HepG2 (cell line): ENCODE measurements at regions of chr16 and their contacts with region 1.

Region 1: DNA sequence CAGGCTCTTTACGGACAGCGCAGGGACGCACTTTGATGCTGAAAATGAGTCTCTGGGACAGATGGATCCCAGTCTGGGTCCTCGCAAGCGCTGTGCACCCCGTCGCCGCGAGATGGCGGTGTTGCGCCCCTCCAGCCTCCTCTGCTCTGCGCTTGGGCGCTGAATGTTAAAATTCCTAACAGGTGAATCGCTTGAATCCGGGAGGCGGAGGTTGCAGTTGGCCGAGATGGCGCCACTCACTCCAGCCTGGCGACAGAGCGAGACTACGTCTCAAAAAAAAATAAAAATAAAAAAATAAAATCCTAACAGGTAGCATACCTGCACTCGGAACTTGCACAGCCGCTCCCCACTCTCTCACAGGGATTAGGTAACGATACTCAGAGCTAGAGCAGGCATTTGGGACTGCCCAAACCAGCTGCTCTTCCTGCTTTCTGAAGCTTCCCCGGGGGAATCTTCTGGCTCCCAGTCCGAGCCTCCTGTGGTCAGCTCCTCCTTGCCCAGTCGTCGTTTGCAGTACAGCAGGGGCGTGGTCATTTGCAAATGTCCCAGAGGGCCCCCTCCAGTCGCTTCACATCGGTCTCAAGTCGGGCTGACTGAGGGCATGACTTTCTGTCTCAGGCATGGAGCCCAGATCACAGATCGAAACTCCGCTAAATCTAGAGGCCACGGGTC is 26.2 kb upstream of the OSGIN1 start:
- DNase-seq: peak; percentile 82
- ATAC-seq: peak; percentile 83
- H3K4me3 ChIP-seq: peak overlapping the region; percentile 20 to 69 (median 47)
- H3K27ac ChIP-seq: no peak overlapping the region
- H3K4me1 ChIP-seq: peaks cover 43% of the 10 kb centered on the region
- H3K27me3 ChIP-seq: peaks cover 3 to 21% of the 10 kb centered on the region in 2 experiments; a peak in 4 of 5 replicates
- CTCF ChIP-seq: peak; percentile 97
- EP300 ChIP-seq: peak in 1 of 2 experiments; percentile 68; a peak in 1 of 4 replicates
- POLR2A ChIP-seq: no peak
- RAD21 ChIP-seq: peak; percentile 97

Region 2: GRCh38 chr16:83898463-83899271 is 28.2 kb before region 1 on chr16 and contains the start of gene MLYCD:
- CTCF ChIA-PET with region 1: no interaction called
- POLR2A ChIA-PET with region 1: no interaction called
- in situ Hi-C with region 1: no loop called
- intact Hi-C with region 1: loop called (anchors 1 kb)
- DNase-seq: peak; percentile 76
- ATAC-seq: peak; percentile 93
- H3K4me3 ChIP-seq: peak within 1 kb of the TSS; percentile 68 to 84 (median 74)
- H3K27ac ChIP-seq: peak within 1 kb of the TSS; percentile 83
- H3K4me1 ChIP-seq: peaks cover 39% of the 10 kb centered on the region
- H3K27me3 ChIP-seq: peaks cover 0 to 13% of the 10 kb centered on the region in 2 experiments; a peak in 3 of 5 replicates
- CTCF ChIP-seq: no peak
- EP300 ChIP-seq: peak; percentile 11 to 33; a peak in 2 of 4 replicates
- POLR2A ChIP-seq: peak; percentile 61 to 74
- RAD21 ChIP-seq: no peak
- total RNA-seq, gene MLYCD: 2.8 and 4.0 TPM in 2 replicates

Region 3: DNA sequence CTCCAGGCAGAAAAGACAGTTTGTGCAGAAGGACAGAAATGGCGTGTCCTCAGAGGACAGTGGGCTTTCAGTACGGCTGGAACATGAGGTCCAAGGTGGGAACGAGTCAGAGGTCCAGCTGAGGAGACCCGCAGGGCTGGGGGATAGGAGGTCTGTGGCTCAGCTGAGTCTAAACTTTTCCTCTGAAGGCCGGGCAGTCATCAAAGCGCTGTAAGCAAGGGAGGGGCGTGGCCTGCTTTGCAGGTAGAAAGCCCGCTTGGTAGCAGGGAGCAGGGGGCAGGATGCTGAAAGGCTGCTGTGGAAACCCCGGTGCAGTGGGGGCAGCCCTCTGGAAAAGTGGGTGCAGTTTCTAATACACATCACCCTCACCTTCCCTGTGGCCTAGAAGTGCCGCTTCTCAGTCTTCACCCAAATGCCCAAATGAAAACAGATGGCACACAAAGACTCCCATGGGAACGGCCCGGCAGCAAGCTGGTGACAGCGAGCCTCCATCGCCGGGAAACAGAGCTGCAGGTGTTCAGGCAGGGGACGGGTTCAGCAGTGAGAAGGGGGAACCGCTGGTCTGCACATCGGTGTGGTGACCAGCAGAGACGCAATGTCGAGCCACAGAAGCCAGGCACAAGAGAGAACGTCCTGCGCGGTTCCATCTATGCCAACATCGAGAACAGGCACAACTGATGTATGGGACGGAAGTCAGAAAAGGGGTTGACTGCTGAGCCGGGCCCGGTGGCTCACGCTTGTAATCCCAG is 13.9 kb after region 1 on chr16:
- CTCF ChIA-PET with region 1: no interaction called
- POLR2A ChIA-PET with region 1: interaction called, 5 read pairs
- in situ Hi-C with region 1: no loop called
- intact Hi-C with region 1: loop called (anchors 2 kb)
- DNase-seq: no peak
- ATAC-seq: no peak
- H3K4me3 ChIP-seq: peak overlapping the region in 1 of 3 experiments; percentile 9; a peak in 1 of 6 replicates
- H3K27ac ChIP-seq: no peak overlapping the region
- H3K4me1 ChIP-seq: peaks cover 84% of the 10 kb centered on the region
- H3K27me3 ChIP-seq: peaks cover 6 to 38% of the 10 kb centered on the region in 2 experiments; a peak in 3 of 5 replicates
- CTCF ChIP-seq: no peak
- EP300 ChIP-seq: no peak
- POLR2A ChIP-seq: no peak
- RAD21 ChIP-seq: no peak

Region 4: DNA sequence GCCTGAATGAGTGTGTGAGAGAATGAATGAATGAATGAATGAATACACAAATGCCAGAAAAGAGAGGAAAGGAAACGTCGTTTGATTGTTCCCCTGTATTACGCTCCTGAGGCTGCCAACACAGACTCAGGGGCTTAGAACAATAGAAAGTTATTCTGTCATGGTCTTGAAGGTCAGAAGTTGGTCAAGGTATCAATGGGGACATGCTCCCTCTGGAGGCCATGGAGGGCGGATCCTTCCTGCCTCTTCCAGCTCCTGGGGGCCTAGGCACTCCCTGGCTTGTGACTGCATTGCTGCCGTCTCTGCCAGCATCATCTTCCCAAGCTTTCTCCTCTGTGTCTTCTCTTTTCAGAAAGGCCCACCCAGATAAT is 117.2 kb after region 1 on chr16:
- CTCF ChIA-PET with region 1: interaction called, 13 read pairs
- POLR2A ChIA-PET with region 1: no interaction called
- in situ Hi-C with region 1: loop called (anchors 10 kb)
- intact Hi-C with region 1: loop called (anchors 1 kb)
- DNase-seq: peak; percentile 73
- ATAC-seq: peak; percentile 72
- H3K4me3 ChIP-seq: no peak overlapping the region
- H3K27ac ChIP-seq: no peak overlapping the region
- H3K4me1 ChIP-seq: peaks cover 37% of the 10 kb centered on the region
- H3K27me3 ChIP-seq: peaks cover 2 to 38% of the 10 kb centered on the region in 2 experiments; a peak in 3 of 5 replicates
- CTCF ChIP-seq: peak; percentile 80
- EP300 ChIP-seq: no peak
- POLR2A ChIP-seq: no peak
- RAD21 ChIP-seq: peak; percentile 61

Region 5: DNA sequence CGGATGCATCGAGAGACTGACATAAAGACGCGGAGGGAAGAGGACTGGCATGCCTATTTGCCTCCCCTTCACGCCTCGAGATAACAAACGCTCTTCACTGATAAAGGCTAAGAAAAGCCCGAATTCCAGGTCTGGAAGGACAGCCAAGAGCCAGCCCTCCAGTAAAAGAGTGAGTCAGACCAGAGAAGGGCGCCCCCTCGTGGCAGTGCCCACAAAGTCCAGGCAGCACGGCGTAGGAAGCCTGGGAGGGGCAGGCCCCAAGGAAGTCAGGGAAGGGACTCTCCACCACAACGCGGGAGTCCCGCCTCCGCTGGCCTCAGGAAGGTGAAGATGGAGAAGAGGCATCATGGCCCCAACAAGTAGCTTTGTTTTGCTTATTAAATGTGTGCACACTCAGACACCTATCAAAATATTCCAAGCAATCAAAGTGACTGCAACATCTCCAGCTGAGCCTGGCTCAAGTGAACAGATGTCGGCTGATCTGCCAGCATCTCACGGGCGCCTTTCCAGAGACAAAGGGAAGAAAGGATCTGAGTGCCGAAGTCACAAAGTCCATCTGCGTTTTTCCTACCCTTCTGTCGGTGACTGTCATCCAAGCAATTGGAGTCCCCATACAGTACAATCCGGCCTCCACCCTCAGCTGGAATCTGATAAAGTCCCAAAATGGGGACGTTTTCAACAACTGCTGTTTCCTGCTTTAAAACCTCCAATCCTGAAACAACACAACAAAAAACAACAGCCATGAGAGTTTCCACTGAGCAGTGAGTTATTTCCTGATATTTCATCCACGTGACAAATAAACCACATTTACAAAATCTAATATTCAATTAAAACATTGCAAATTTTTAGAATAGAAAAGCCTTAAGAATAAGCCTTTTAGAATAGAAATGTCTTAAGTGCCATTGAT is 136.1 kb after region 1 on chr16:
- CTCF ChIA-PET with region 1: interaction called, 19 read pairs
- POLR2A ChIA-PET with region 1: no interaction called
- in situ Hi-C with region 1: no loop called
- intact Hi-C with region 1: loop called (anchors 1 kb)
- DNase-seq: peak; percentile 59
- ATAC-seq: peak; percentile 97
- H3K4me3 ChIP-seq: no peak overlapping the region
- H3K27ac ChIP-seq: no peak overlapping the region
- H3K4me1 ChIP-seq: no peaks in the 10 kb centered on the region
- H3K27me3 ChIP-seq: no peaks in the 10 kb centered on the region
- CTCF ChIP-seq: peak; percentile 95
- EP300 ChIP-seq: no peak
- POLR2A ChIP-seq: no peak
- RAD21 ChIP-seq: peak; percentile 72